ENCODE measurements at regions of chr17 and their contacts with region 1.

Region 1: GRCh38 chr17:35537601-35538141 is at the start of gene SLFN12L:
- DNase-seq: peak in 2 of 4 experiments; percentile 26 to 55
- ATAC-seq: no peak; the same call in 2 of the 3 replicates
- H3K4me3 ChIP-seq: no peak within 1 kb of the TSS
- H3K27ac ChIP-seq: peak within 1 kb of the TSS; percentile 14; the same call in 1 of the 3 replicates
- H3K4me1 ChIP-seq: peaks cover 10 to 36% of the 10 kb centered on the region in 2 experiments; a peak in 3 of 5 replicates
- H3K27me3 ChIP-seq: no peaks in the 10 kb centered on the region
- CTCF ChIP-seq: no peak
- EP300 ChIP-seq: no peak
- POLR2A ChIP-seq: no peak
- RAD21 ChIP-seq: no peak
- polyA plus RNA-seq, gene SLFN12L: 0.04 TPM in 1 of 2 experiments, not detected in the other

Region 2: DNA sequence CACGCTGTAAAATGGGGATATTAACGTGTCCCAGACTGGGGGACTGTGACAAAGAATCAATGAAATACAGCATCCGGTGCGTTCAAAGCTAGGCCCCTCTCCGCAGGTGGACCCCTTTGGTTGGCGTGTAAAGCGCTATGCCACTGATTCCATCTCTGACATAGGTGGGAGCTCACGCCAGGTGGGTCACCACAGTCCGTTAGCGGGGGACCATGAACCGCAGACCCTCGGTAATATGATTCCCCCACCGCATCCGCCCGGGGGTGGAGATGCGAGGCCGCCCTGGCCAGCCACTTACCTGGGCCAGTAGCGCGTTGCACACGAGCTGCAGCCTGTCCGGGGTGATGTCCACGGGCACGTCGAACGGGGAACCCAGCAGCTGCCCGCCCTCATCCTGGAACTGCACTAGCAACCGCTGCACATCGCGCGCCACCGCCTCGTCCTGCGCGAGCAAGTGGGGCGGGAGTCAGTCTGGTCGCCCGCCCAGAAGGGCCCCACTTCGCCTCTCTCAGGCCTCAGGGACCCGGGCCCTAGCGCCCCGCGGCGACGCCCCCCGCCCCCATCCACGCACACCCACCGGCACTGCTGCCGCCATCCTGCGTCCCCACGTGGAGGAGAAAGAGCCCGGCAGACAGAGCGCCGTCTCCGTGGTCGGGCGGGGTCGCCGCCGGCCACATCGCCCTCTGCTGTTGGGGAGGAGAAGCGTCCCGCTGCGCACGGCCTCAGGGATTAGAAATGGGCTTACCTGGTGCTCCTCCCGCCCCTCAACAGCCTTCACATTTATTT is 395.8 kb before region 1 on chr17 and contains the start of gene NLE1:
- CTCF ChIA-PET with region 1: interaction called, 5 read pairs
- POLR2A ChIA-PET with region 1: no interaction called
- in situ Hi-C with region 1: no loop called
- intact Hi-C with region 1: loop called (anchors 10 kb)
- DNase-seq: peak; percentile 88 to 95 (median 92)
- ATAC-seq: peak; percentile 94
- H3K4me3 ChIP-seq: peak within 1 kb of the TSS; percentile 91
- H3K27ac ChIP-seq: peak within 1 kb of the TSS; percentile 70
- H3K4me1 ChIP-seq: peaks cover 0 to 15% of the 10 kb centered on the region in 2 experiments; a peak in 3 of 5 replicates
- H3K27me3 ChIP-seq: 0 out of 5 replicates have a peak, but pooled peaks cover 0 to 2% of the 10 kb centered on the region in 2 experiments
- CTCF ChIP-seq: peak; percentile 86 to 91 (median 90)
- EP300 ChIP-seq: no peak
- POLR2A ChIP-seq: peak; percentile 84
- RAD21 ChIP-seq: peak in 1 of 2 experiments; percentile 32; a peak in 2 of 4 replicates
- polyA plus RNA-seq, gene NLE1: 3.8 to 7.0 TPM

Region 3: DNA sequence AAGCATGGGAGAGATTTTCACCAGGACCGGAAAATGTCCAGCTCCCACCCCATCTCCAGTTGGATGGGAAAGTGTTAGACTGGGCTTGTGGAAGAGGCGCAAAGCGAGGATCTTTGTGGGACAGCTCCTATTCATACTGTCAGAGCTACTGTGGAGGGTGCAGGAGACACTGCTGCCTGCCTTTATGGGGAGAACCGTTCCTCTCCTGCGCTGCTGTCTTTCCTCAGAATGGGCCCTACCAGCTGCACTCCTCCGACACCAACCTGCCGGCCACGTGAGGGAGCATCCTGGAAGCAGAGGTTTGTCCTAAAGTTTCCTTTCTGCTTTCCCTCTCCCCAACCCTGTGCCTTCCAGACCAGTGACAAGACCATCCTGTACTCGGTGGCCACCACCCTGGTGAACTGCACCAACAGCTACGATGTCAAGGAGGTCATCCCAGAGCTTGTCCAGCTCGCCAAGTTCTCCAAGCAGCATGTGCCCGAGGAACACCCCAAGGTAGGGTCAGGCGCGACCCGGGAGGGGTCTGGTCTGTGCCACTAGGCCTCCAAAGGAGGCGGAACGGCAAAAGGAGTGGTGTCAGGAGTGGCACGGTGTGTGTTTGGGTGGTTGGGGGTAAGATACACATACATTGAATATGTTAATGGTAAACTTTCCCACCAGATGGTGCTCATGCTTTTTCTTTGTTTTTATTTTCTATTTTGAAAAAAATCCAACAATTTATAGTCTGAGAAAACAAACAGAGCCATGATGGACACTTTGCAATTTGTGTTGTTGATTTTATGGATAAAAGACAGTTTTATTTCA is 366.5 kb before region 1 on chr17:
- CTCF ChIA-PET with region 1: interaction called, 6 read pairs
- POLR2A ChIA-PET with region 1: no interaction called
- in situ Hi-C with region 1: loop called (anchors 5 kb)
- intact Hi-C with region 1: loop called (anchors 2 kb)
- DNase-seq: no peak
- ATAC-seq: peak; percentile 57
- H3K4me3 ChIP-seq: no peak overlapping the region
- H3K27ac ChIP-seq: no peak overlapping the region
- H3K4me1 ChIP-seq: no peaks in the 10 kb centered on the region
- H3K27me3 ChIP-seq: peaks cover 14 to 65% of the 10 kb centered on the region in 2 experiments
- CTCF ChIP-seq: peak in 2 of 3 experiments; percentile 31 to 40; a peak in 2 of 6 replicates
- EP300 ChIP-seq: no peak
- POLR2A ChIP-seq: no peak
- RAD21 ChIP-seq: peak in 1 of 2 experiments; percentile 62; a peak in 2 of 4 replicates

Region 4: DNA sequence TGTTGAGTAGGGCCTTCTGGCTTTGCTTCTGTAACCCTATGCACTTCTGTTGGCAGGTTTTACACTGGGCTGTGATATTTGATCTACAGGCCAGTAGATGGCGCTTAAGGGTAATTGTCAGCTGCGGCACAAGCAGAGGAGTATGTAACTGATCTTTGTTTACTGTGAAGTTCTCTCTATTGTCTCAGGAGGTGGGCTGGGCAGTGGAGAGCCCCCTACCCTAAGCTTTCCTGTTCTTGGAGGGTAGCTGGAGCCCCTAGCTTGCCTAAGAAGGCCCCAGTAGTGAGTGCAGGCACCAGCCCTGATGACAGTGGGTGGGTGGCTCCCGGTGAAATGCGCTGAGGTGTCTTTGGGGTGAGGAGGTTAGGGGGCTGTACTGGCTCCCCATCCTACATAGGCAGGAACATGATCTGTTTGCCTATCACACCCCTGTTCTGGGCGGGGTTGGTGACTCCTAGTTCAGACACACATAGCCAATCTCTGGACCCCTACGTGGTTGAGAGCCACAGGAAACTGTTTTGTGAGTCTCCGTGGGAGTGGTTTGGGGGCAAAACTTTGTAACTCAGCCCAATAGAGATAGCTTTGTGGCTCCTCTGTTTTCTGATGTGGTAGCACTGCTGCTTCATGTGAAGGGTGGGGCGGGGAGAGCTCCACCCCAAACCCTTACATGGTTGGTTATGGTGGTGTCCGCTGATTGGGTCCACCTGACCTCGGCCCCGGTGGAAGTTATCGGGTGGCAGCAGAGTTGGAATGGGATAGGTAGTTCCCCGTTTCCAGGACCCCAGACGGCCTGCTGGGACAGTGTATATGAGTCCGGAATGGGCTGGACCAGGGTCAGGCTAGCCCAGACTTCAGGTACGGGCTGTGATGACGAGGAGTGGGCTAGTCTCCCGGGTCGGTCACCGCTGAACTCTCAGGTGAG is 224.6 kb before region 1 on chr17:
- CTCF ChIA-PET with region 1: interaction called, 21 read pairs
- POLR2A ChIA-PET with region 1: interaction called, 3 read pairs
- in situ Hi-C with region 1: loop called (anchors 5 kb)
- intact Hi-C with region 1: loop called (anchors 1 kb)
- DNase-seq: peak; percentile 58 to 70 (median 64)
- ATAC-seq: peak; percentile 97
- H3K4me3 ChIP-seq: no peak overlapping the region
- H3K27ac ChIP-seq: no peak overlapping the region
- H3K4me1 ChIP-seq: peaks cover 6 to 15% of the 10 kb centered on the region in 2 experiments; a peak in 4 of 5 replicates
- H3K27me3 ChIP-seq: peaks cover 0 to 6% of the 10 kb centered on the region in 2 experiments; a peak in 1 of 5 replicates
- CTCF ChIP-seq: peak; percentile 70 to 83 (median 82)
- EP300 ChIP-seq: no peak
- POLR2A ChIP-seq: no peak
- RAD21 ChIP-seq: peak; percentile 69 to 85

Region 5: GRCh38 chr17:35432176-35433074 is 105.2 kb before region 1 on chr17 and contains the start of gene SLFN12:
- CTCF ChIA-PET with region 1: no interaction called
- POLR2A ChIA-PET with region 1: no interaction called
- in situ Hi-C with region 1: no loop called
- intact Hi-C with region 1: loop called (anchors 10 kb)
- DNase-seq: no peak
- ATAC-seq: no peak
- H3K4me3 ChIP-seq: no peak within 1 kb of the TSS
- H3K27ac ChIP-seq: no peak within 1 kb of the TSS
- H3K4me1 ChIP-seq: peaks cover 0 to 7% of the 10 kb centered on the region in 2 experiments; a peak in 2 of 5 replicates
- H3K27me3 ChIP-seq: peaks cover 20 to 23% of the 10 kb centered on the region in 2 experiments; a peak in 4 of 5 replicates
- CTCF ChIP-seq: no peak
- EP300 ChIP-seq: no peak
- POLR2A ChIP-seq: no peak
- RAD21 ChIP-seq: no peak
- polyA plus RNA-seq, gene SLFN12: 0.01 TPM in 1 of 2 experiments, not detected in the other

Region 6: DNA sequence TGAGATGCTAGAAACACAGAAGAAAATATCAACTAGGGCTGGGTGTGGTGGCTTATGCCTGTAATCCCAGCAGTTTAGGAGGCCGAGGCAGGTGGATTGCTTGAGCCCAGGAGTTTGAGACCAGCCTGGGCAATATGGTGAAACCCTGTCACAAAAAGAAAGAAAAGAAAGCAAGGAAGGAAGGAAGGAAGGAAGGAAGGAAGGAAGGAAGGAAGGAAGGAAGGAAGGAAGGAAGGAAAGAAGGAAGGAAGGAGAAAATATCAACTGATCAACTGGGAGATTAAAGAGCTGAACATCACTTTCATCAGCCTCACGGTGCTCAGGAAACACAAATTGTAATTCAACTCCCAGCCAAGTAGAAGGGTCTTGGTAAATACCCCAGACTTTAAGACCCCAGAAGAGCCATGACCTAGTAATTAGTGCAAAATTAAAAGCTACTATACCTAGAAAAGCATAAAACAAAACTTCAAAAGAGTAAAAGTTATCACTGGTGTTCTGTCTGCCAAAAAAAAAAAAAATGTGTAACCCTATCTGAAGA is 61.3 kb before region 1 on chr17:
- CTCF ChIA-PET with region 1: no interaction called
- POLR2A ChIA-PET with region 1: no interaction called
- in situ Hi-C with region 1: no loop called
- intact Hi-C with region 1: loop called (anchors 10 kb)
- DNase-seq: no peak
- ATAC-seq: no peak
- H3K4me3 ChIP-seq: no peak overlapping the region
- H3K27ac ChIP-seq: no peak overlapping the region
- H3K4me1 ChIP-seq: no peaks in the 10 kb centered on the region
- H3K27me3 ChIP-seq: no peaks in the 10 kb centered on the region; a peak in 2 of 5 replicates
- CTCF ChIP-seq: no peak
- EP300 ChIP-seq: no peak
- POLR2A ChIP-seq: no peak
- RAD21 ChIP-seq: no peak

Region 7: DNA sequence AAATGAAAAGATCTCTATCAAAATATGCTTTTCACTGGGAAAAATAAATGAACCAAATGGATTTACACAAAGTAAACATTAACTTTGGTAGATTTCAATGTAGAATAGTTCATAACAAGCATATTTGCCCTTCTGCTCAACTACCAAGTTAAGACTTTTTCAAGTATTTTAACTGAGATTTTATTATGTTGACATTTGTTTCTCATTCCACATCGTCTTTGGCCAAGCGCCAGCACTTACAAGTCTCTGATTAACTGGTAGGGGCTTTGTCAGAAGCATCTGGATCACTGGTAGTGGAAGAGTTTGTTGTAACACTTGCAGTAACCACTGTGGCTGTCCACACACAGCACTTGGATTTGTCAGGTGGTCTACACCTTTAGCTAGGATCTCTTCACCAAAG is 23.1 kb before region 1 on chr17:
- CTCF ChIA-PET with region 1: no interaction called
- POLR2A ChIA-PET with region 1: no interaction called
- in situ Hi-C with region 1: no loop called
- intact Hi-C with region 1: no loop called
- DNase-seq: no peak
- ATAC-seq: no peak
- H3K4me3 ChIP-seq: no peak overlapping the region
- H3K27ac ChIP-seq: no peak overlapping the region
- H3K4me1 ChIP-seq: 0 out of 5 replicates have a peak, but pooled peaks cover 0 to 3% of the 10 kb centered on the region in 2 experiments
- H3K27me3 ChIP-seq: peaks cover 14 to 36% of the 10 kb centered on the region in 2 experiments; a peak in 4 of 5 replicates
- CTCF ChIP-seq: no peak
- EP300 ChIP-seq: no peak
- POLR2A ChIP-seq: no peak
- RAD21 ChIP-seq: no peak

Measured in K562 (cell line).